Stomach (tissue), 19 donors: ENCODE measurements at regions of chr17 and their contacts with region 1.

Region 1: DNA sequence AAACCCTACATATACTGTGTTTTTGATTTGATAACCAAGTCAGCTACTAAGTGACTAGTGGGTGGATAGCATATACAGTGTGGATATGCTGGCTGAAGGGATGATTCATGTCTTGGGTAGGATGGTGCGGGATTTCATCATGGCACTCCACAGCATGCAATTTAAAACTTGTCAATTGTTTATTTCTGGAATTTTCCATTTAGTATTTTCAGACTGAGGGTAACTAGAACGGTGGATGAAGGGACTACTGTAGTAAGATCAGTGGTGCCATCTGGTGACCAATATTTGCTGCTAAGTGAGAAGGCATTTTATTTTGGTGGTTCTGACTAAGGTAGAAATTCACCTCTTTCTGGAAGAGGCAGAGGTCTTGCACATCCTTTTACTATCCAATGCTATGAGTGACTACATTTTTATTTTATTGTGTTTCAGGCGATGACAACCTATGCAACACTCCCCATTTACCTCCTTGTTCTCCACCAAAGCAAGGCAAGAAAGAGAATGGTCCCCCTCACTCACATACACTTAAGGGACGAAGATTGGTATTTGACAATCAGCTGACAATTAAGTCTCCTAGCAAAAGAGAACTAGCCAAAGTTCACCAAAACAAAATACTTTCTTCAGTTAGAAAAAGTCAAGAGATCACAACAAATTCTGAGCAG is 3.1 kb downstream of the CDC6 start:
- DNase-seq: peak; percentile 46 to 88
- H3K4me3 ChIP-seq: no peak overlapping the region
- H3K27ac ChIP-seq: peak overlapping the region in 1 of 5 donors; percentile 3
- H3K4me1 ChIP-seq: peaks cover 10 to 32% (median 18%) of the 10 kb centered on the region in 4 donors
- H3K27me3 ChIP-seq: no peaks in the 10 kb centered on the region
- CTCF ChIP-seq: peak in 5 of 7 experiments; percentile 44 to 76 (median 57)
- EP300 ChIP-seq: no peak
- POLR2A ChIP-seq: no peak

Region 2: GRCh38 chr17:40153603-40154236 is 137.0 kb before region 1 on chr17:
- intact Hi-C with region 1: no loop called
- DNase-seq: no peak
- H3K4me3 ChIP-seq: no peak overlapping the region
- H3K27ac ChIP-seq: peak overlapping the region in 2 of 5 donors; percentile 17 to 30
- H3K4me1 ChIP-seq: peaks cover 0 to 66% (median 32%) of the 10 kb centered on the region in 4 donors
- H3K27me3 ChIP-seq: no peaks in the 10 kb centered on the region
- CTCF ChIP-seq: no peak
- EP300 ChIP-seq: no peak
- POLR2A ChIP-seq: no peak

Region 3: GRCh38 chr17:40203131-40203530 is 87.6 kb before region 1 on chr17:
- intact Hi-C with region 1: loop called (anchors 5 kb)
- DNase-seq: no peak
- H3K4me3 ChIP-seq: no peak overlapping the region
- H3K27ac ChIP-seq: peak overlapping the region in 1 of 5 donors; percentile 8
- H3K4me1 ChIP-seq: peaks cover 0 to 10% (median 4%) of the 10 kb centered on the region in 4 donors
- H3K27me3 ChIP-seq: no peaks in the 10 kb centered on the region
- CTCF ChIP-seq: no peak
- EP300 ChIP-seq: no peak
- POLR2A ChIP-seq: no peak

Region 4: DNA sequence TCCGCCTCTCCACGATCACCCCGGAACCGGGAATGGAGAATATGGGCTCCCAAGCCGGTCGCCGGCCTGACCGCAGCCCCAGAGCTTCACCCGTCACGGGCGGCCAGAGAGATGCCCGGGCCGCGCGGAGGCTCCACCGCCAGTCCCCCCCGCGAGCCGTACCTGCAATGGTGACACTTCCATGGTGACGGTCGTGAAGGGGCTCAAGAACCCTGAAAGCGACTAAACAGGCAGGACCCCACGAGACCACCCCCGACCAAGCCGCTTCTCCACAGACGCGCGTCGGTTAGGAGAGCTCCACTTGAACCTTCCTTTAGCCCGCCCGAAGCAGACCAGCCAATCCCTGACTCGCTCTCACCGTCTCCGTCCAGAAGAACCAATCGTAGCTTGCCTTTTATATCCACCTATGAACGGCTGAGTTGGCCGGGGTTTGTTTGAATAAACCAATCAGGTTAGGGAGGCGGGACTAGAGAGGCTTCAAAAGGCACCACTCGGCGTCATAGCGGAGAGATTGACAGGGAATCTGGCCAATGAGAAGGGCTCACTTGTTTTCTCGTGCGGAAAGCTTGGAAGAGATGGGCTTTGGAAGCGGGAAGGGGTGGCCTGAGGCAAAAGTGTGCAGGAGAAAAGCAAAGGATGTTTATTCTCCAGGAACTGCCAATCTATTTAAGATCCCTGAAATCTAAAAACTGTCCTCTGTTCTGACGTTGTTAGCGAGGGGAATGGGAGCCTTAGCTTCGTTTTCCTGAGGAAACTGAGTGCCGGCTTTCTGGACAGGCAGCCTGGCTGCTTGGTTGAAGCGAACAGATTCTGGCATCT is 127.1 kb after region 1 on chr17 and contains the start of gene TOP2A:
- intact Hi-C with region 1: loop called (anchors 10 kb)
- DNase-seq: peak; percentile 99 to 100
- H3K4me3 ChIP-seq: peak within 1 kb of the TSS; percentile 54 to 75 (median 66)
- H3K27ac ChIP-seq: peak within 1 kb of the TSS in 4 of 5 donors; percentile 65 to 70 (median 67)
- H3K4me1 ChIP-seq: peaks cover 4 to 47% (median 19%) of the 10 kb centered on the region in 4 donors
- H3K27me3 ChIP-seq: no peaks in the 10 kb centered on the region
- CTCF ChIP-seq: no peak
- EP300 ChIP-seq: no peak
- POLR2A ChIP-seq: no peak
- total RNA-seq, gene TOP2A: 8.0 to 129 (median 17.2) TPM